Naive thymus-derived CD4-positive, alpha-beta T cell (primary cell): ENCODE measurements at regions of chr13 and their contacts with region 1.

Region 1: GRCh38 chr13:80012251-80012650 is 328.7 kb downstream of the SPRY2 start:
- DNase-seq: no peak
- ATAC-seq: no peak
- H3K4me3 ChIP-seq: no peak overlapping the region
- H3K4me3 Mint-ChIP-seq: no peak overlapping the region
- H3K27ac ChIP-seq: no peak overlapping the region
- H3K27ac Mint-ChIP-seq: no peak overlapping the region
- H3K4me1 ChIP-seq: no peaks in the 10 kb centered on the region
- H3K4me1 Mint-ChIP-seq: peaks cover 0 to 6% (median 0%) of the 10 kb centered on the region in 7 donors
- H3K27me3 ChIP-seq: no peaks in the 10 kb centered on the region
- H3K27me3 Mint-ChIP-seq: peaks cover 0 to 12% (median 5%) of the 10 kb centered on the region in 5 donors

Region 2: DNA sequence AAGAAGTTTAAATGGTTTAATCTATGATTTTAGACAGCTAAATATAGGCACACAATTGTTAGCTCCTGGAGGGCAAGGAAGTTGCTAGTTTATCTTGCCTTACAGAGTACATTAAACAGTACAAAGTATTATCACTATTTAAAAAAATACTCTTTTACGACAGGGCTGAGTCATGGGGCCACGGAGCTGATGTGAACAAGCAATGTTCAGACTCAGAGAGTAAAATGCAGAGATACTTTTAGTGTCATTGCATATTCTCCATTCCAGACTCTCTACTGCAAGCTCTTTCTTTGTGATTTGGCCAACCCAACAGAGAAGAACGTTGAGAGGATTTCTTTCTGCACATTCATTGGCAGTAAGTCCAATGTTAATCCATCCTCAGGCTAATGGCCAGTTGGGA is 23.7 kb before region 1 on chr13:
- CTCF ChIA-PET with region 1: no interaction called
- POLR2A ChIA-PET with region 1: no interaction called
- intact Hi-C with region 1: no loop called
- DNase-seq: no peak
- ATAC-seq: no peak
- H3K4me3 ChIP-seq: no peak overlapping the region
- H3K4me3 Mint-ChIP-seq: no peak overlapping the region
- H3K27ac ChIP-seq: no peak overlapping the region
- H3K27ac Mint-ChIP-seq: no peak overlapping the region
- H3K4me1 ChIP-seq: no peaks in the 10 kb centered on the region
- H3K4me1 Mint-ChIP-seq: no peaks in the 10 kb centered on the region
- H3K27me3 ChIP-seq: no peaks in the 10 kb centered on the region
- H3K27me3 Mint-ChIP-seq: peaks cover 0 to 7% (median 4%) of the 10 kb centered on the region in 5 donors

Region 3: DNA sequence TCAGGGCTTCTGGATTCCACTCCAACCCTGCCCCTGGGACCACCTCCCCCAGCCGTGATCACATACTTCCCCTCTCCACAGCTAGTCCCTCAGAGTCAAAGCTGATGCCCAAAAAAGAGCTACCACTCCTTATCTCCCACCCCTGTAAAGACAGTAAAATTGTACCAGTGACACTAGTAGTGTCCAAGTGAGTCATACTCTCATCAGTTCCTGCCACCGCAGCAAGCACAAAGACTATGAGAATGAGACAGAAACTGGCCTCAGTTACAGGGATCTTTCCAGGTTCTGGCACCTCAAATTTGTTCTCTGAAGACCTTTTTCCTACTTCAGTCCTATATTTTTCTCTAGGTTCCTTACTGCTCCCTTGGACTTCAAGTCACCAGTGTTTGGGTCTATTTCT is 184.5 kb after region 1 on chr13:
- CTCF ChIA-PET with region 1: no interaction called
- POLR2A ChIA-PET with region 1: no interaction called
- intact Hi-C with region 1: loop called in 1 of 2 experiments (anchors 5 kb)
- DNase-seq: no peak
- ATAC-seq: no peak
- H3K4me3 ChIP-seq: no peak overlapping the region
- H3K4me3 Mint-ChIP-seq: no peak overlapping the region
- H3K27ac ChIP-seq: no peak overlapping the region
- H3K27ac Mint-ChIP-seq: no peak overlapping the region
- H3K4me1 ChIP-seq: no peaks in the 10 kb centered on the region
- H3K4me1 Mint-ChIP-seq: no peaks in the 10 kb centered on the region
- H3K27me3 ChIP-seq: no peaks in the 10 kb centered on the region
- H3K27me3 Mint-ChIP-seq: no peaks in the 10 kb centered on the region